ENCODE measurements at regions of chr22 and their contacts with region 1.

Region 1: DNA sequence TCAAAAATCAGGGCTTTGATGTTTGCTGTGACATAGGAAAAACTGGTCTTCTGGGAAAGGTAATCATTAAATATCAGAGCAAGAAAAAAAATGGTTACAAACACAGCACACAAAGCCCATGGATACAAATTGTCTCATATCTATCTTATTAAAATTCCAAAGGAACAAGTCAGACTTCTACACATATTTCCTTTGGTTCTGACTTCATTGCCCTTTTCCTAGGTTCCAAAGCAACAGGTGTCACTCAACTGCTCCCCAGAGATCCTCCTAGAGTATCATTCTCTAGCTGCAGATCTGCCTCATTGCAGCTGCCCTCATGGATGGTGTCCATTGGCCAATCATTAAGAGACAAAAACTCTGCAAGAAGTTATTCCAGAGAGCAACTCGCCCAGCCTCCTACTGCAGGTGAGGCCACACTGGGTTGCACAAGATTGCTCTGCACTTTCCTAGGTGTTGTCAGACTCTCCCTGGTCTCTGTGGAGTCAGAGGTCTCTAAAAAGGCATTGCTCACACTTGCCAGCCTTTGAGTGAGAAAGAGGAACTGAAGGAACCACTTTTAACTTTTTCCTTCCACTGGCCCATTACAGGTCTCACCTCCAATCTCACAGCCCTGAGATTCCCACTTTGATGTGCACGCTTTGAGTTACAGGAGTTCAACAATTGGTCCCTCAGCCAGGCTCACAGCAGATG is 5.7 kb downstream of the DRICH1 start:
- DNase-seq: no peak
- ATAC-seq: no peak
- H3K4me3 ChIP-seq: no peak overlapping the region
- H3K27ac ChIP-seq: no peak overlapping the region
- H3K4me1 ChIP-seq: peaks cover 45% of the 10 kb centered on the region
- H3K27me3 ChIP-seq: no peaks in the 10 kb centered on the region; a peak in 1 of 5 replicates
- CTCF ChIP-seq: no peak
- EP300 ChIP-seq: no peak
- POLR2A ChIP-seq: no peak
- RAD21 ChIP-seq: no peak

Region 2: DNA sequence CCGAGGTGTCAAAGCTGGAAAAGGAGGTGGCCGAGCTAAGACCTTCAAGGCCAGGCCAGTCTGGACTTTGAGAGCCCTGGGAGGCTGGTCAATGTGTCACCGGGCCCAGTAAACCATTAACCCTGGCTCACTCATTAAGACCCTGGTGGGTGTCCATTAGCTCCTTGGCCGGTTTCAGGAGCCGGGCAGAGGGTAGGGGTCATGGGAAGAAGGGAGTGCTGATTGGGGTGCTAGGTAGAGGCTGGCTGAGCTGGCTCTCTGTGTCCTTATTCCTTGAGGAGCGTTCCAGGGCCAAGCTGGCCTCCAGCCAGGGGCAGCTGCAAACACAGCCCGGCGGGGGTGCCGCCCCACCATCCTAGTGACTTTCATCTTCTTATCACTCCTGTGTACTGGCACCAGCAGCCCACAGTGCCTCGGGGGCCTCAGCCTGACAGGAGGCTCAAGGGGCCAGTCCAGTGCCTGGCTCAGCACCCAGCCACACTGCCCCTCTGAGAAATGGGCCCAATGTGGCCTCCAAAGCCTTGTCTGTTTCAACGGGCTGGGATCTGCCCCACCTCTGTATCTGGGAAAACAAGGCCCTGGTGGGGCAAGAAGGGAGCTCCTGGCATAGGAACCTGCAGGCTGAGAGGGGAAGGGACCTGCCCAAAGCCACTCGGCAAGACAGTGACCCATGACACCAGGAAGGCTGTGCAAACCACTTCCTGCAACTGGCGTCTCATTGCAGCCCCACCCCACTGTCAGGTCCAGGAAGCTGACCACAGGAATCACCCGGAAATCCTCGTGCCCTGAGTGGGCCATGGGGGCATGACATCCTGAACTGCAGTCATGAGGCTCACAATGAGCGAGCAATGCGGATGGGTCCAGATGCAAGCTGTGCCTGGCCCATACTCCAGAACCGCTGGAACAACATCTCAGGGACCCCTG is 49.3 kb after region 1 on chr22:
- CTCF ChIA-PET with region 1: no interaction called
- POLR2A ChIA-PET with region 1: no interaction called
- in situ Hi-C with region 1: no loop called
- intact Hi-C with region 1: loop called (anchors 5 kb)
- DNase-seq: peak; percentile 69
- ATAC-seq: peak; percentile 83
- H3K4me3 ChIP-seq: peak overlapping the region in 1 of 3 experiments; percentile 56; a peak in 3 of 6 replicates
- H3K27ac ChIP-seq: peak overlapping the region; percentile 74
- H3K4me1 ChIP-seq: peaks cover 64% of the 10 kb centered on the region
- H3K27me3 ChIP-seq: no peaks in the 10 kb centered on the region
- CTCF ChIP-seq: no peak
- EP300 ChIP-seq: no peak
- POLR2A ChIP-seq: peak in 1 of 2 experiments; percentile 59; a peak in 2 of 4 replicates
- RAD21 ChIP-seq: no peak

Region 3: GRCh38 chr22:23790819-23791737 is 164.6 kb after region 1 on chr22:
- CTCF ChIA-PET with region 1: no interaction called
- POLR2A ChIA-PET with region 1: no interaction called
- in situ Hi-C with region 1: no loop called
- intact Hi-C with region 1: no loop called
- DNase-seq: no peak
- ATAC-seq: no peak
- H3K4me3 ChIP-seq: no peak overlapping the region
- H3K27ac ChIP-seq: no peak overlapping the region
- H3K4me1 ChIP-seq: peaks cover 32% of the 10 kb centered on the region
- H3K27me3 ChIP-seq: no peaks in the 10 kb centered on the region
- CTCF ChIP-seq: no peak
- EP300 ChIP-seq: no peak
- POLR2A ChIP-seq: no peak
- RAD21 ChIP-seq: no peak